ENCODE measurements at regions of chr10 and their contacts with region 1.

Region 1: DNA sequence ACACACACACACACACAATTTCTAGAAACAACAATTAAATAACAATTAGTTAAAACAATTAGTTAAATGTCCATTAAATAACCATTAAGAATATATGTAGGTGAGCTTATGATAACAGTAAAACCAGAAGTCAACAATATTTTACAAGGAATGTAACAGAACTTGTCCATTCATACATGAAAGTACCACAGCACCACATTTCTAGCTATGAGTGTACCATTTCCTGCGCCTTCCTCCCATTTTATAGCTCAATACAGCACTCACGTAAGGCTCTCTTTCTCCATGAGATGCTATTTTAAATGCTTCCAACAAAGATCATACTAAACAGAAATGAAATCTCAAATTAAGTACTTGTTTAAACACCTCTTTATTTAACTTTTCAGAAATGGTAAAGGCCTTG is 367.3 kb upstream of the ZWINT start:
- DNase-seq: no peak
- ATAC-seq: peak; percentile 32
- H3K4me3 ChIP-seq: no peak overlapping the region
- H3K27ac ChIP-seq: no peak overlapping the region
- H3K4me1 ChIP-seq: no peaks in the 10 kb centered on the region
- H3K27me3 ChIP-seq: no peaks in the 10 kb centered on the region
- CTCF ChIP-seq: no peak
- EP300 ChIP-seq: no peak
- POLR2A ChIP-seq: no peak
- RAD21 ChIP-seq: no peak

Region 2: DNA sequence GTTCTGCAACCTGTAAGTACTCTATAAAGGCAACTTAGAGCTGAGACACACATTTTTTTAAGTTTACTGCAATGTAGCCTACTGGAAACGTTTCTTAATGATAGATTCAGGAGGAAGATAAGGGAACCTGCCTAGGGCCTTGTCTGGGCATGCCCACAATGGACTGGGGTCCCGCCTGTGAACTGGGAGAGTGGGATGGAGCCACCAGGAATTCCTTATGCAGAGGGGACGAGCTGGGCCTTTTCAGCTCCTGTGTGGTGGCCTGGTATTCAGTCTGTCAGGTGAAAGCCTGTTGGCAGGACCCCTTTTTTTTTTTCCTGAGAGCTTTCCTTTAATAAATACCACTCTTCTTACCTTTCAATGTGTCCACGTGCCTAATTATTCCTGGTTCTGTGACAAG is 17.1 kb after region 1 on chr10:
- CTCF ChIA-PET with region 1: interaction called, 3 read pairs
- POLR2A ChIA-PET with region 1: no interaction called
- RAD21 ChIA-PET with region 1: no interaction called
- SMC1A ChIA-PET with region 1: interaction called, 3 read pairs
- in situ Hi-C with region 1: no loop called
- intact Hi-C with region 1: loop called (anchors 1 kb)
- DNase-seq: no peak
- ATAC-seq: no peak
- H3K4me3 ChIP-seq: no peak overlapping the region
- H3K27ac ChIP-seq: no peak overlapping the region
- H3K4me1 ChIP-seq: no peaks in the 10 kb centered on the region
- H3K27me3 ChIP-seq: no peaks in the 10 kb centered on the region
- CTCF ChIP-seq: no peak
- EP300 ChIP-seq: no peak
- POLR2A ChIP-seq: no peak
- RAD21 ChIP-seq: no peak

Region 3: DNA sequence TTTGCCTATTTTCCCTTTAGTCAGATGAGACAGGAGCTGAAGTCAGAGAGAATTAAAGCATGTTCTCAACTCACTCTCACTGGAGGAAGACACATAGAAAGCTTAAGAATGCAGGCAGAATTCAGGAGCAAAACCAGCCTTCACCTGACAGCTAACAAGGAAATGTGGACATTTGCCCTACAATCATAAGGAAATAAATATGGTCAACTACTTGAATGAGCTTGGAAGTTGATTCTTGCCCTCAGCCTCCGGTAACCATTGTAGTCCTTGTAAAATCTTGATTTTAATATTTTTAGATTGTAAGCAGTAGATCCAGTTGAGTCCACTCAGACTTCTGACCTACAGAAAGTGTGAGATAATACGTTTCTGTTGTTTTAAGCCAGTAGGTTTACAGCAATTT is 385.2 kb after region 1 on chr10:
- CTCF ChIA-PET with region 1: no interaction called
- POLR2A ChIA-PET with region 1: no interaction called
- RAD21 ChIA-PET with region 1: no interaction called
- SMC1A ChIA-PET with region 1: no interaction called
- in situ Hi-C with region 1: no loop called
- intact Hi-C with region 1: no loop called
- DNase-seq: no peak
- ATAC-seq: no peak
- H3K4me3 ChIP-seq: no peak overlapping the region
- H3K27ac ChIP-seq: no peak overlapping the region
- H3K4me1 ChIP-seq: no peaks in the 10 kb centered on the region
- H3K27me3 ChIP-seq: no peaks in the 10 kb centered on the region
- CTCF ChIP-seq: no peak
- EP300 ChIP-seq: no peak
- POLR2A ChIP-seq: no peak
- RAD21 ChIP-seq: no peak

Measured in GM12878 (cell line).